ENCODE measurements at regions of chr10 and their contacts with region 1.

Region 1: GRCh38 chr10:89217057-89217990 is 10.2 kb upstream of the CH25H start:
- DNase-seq: no peak

Region 2: GRCh38 chr10:88944813-88945212 is 272.5 kb before region 1 on chr10:
- intact Hi-C with region 1: loop called in 1 of 2 experiments (anchors 10 kb)
- DNase-seq: no peak

Region 3: GRCh38 chr10:89029785-89030437 is 187.4 kb before region 1 on chr10:
- intact Hi-C with region 1: loop called (anchors 1 to 5 kb)
- DNase-seq: peak; percentile 91